Right lobe of liver (tissue), 6 donors: ENCODE measurements at regions of chr21 and their contacts with region 1.

Region 1: DNA sequence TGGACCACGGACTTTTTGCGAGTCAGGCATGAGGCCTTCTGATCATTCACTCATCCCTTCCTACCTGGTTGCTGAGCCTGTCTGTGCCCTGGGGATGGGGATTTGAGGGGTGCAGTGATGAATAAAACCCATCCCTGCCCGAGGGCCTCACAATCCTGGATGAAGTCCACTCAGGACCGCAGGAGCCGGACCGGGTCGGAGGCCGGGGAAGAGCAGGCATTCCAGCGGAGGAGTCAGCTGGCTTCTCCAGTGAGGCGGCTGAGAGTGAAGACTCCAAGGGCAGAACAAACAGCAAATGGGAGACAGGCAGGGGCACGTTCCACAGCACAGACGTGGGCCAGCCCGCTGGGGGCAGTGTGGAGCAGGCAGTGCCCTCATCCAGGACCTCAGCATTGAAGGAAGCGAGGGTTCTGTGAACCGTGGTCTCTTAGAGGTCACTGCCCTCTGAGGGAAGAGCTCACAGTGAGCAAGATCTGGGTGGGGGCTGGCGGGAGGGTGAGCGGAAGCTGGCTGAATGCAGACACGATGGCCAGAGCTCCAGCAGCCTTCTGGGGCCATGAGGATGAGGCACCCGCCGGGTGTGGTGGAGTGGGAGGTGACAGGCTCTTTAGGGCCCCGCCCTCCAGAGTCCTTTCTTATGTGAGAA is 10.9 kb upstream of the LRRC3 start:
- DNase-seq: peak; percentile 14 to 40 (median 35)
- ATAC-seq: peak in 3 of 4 donors; percentile 6 to 54 (median 18)
- H3K4me3 ChIP-seq: no peak overlapping the region
- H3K27ac ChIP-seq: no peak overlapping the region
- H3K4me1 ChIP-seq: no peaks in the 10 kb centered on the region
- H3K27me3 ChIP-seq: no peaks in the 10 kb centered on the region
- CTCF ChIP-seq: no peak
- POLR2A ChIP-seq: no peak

Region 2: DNA sequence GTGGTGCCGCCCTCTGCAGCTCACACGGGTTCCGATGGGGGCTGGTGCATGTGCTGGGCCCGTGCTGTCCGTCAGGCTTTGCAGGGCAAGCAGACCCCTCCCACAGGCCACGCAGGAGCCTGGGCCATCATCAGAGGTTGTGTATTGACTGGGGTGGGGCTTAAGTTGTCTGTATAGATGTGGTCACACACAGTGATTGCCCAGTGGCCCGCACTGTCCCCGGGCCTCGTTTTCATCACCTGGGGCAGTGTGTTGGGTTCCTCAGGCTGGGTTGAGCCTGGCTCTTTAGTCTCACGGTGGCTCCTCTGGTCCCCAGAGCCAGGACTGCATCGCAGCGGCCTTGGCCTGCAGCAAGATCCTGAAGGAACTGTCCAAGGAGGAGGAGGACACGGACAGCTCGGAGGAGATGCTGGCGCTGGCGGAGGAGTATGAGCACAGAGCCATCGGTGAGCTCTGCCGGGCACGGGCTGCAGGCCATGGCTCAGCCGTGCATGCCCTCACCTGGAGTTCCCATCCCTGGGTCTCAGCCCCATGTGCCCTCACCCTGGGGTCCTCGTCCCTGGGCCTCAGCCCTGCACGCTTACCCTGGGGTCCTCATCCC is 46.9 kb before region 1 on chr21:
- intact Hi-C with region 1: loop called in 1 of 2 experiments (anchors 10 kb)
- DNase-seq: peak in 1 of 3 donors; percentile 48
- ATAC-seq: peak in 1 of 4 donors; percentile 9
- H3K4me3 ChIP-seq: no peak overlapping the region
- H3K27ac ChIP-seq: no peak overlapping the region
- H3K4me1 ChIP-seq: no peaks in the 10 kb centered on the region
- H3K27me3 ChIP-seq: no peaks in the 10 kb centered on the region
- CTCF ChIP-seq: no peak
- POLR2A ChIP-seq: no peak